ENCODE measurements at regions of chr2 and their contacts with region 1.

Region 1: DNA sequence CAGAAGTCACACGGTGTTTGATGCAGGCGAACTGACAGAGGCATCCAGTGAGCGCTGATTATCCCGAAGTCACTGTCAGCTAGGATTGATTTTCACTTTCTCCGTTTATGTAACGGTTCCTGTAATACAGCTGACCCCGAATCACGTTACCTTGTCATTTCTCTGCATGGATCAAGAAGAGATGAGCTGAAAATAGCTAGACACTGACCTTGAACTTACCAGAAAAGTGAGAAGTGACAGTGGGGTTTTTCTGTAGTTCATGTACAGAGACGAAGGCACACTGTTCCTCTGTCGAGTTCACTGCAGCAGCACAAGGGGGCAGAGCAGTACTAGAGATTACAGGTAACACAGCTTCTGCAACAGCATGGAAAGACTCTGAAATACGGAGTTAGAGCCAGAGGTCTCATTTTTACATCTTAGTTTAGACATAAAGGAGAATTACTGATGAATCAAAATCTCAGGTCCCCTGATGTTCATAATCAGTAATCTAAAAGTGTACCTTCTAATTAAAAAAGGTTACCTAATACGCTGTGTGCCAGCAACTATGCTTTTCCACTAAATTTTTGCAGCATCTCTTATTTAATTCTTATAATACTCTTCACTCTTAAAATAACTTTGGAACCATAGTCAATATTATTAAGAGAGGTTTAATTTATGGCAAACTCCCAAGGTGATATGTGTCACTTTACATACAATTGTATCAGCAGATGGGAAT is 33.1 kb downstream of the ARHGAP15 start:
- DNase-seq: peak; percentile 16
- ATAC-seq: peak; percentile 81 to 89

Region 2: DNA sequence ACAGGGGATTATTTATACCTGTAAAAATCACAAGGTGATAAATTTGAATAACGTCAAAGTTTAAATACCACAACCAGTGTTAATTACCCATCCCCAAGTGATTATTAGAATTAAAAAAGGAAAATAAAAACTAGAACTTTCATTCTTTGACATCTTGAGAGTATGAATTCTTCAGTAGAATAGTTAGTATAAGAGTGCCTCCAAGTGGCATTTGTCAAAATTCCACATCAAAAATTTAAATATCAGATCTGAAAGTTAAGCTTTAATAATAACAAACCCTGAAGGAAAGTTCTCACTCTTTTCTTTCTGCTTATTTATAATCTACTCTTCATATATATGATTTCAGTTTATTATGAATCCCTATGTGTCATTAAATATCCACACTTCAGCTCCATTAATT is 558.5 kb before region 1 on chr2:
- intact Hi-C with region 1: no loop called
- DNase-seq: no peak
- ATAC-seq: no peak

Region 3: DNA sequence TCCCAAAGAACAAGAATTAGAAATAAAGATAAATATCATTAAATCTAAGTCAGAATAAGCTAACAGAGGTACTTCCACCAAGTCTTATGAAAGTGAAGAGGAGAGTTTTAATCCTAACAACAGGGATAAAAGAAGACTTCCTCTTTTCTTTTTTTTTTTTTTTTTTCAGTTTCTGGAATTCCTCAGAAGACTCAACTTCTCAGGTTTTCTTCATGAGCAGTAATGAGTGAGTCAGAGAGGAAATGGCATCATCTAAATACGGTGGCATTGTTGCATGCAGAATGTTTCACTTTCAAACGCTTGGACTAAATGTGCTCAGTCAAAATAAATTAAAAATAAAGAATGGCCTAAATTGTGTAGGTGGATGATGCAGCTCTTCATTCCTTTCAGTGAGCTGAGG is 78.6 kb before region 1 on chr2:
- intact Hi-C with region 1: no loop called
- DNase-seq: no peak
- ATAC-seq: no peak

Region 4: DNA sequence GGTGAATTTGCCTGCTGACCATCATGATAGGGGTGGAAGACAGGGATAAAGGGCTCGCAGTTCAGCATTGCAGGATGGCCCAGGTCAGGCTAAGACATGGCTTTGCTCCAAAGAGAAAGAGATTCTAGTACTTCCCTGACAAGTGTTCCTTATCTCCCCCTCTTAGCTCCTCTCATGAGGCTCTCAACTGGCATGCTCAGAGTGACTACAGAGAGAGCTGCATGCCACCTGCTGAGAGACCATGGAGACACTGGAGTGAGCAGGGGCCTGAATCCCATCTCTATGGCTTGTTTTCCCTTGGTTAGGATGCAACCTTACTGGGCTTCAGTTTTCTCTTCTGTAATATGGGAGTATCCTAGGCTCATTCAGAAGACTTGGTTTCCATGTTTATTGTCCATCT is 61.3 kb after region 1 on chr2:
- intact Hi-C with region 1: loop called in 1 of 2 experiments (anchors 5 kb)
- DNase-seq: no peak
- ATAC-seq: no peak

Measured in left cardiac atrium (tissue), 4 donors.